Heart right ventricle (tissue), 16 donors: ENCODE measurements at regions of chr21 and their contacts with region 1.

Region 1: GRCh38 chr21:46025113-46025770 is 43.7 kb downstream of the COL6A1 start:
- DNase-seq: no peak
- ATAC-seq: no peak
- H3K4me3 ChIP-seq: no peak overlapping the region
- H3K27ac ChIP-seq: peak overlapping the region in 4 of 10 donors; percentile 11 to 49 (median 35)
- H3K4me1 ChIP-seq: peaks cover 0 to 22% (median 9%) of the 10 kb centered on the region in 9 donors
- H3K27me3 ChIP-seq: no peaks in the 10 kb centered on the region
- CTCF ChIP-seq: no peak

Region 2: DNA sequence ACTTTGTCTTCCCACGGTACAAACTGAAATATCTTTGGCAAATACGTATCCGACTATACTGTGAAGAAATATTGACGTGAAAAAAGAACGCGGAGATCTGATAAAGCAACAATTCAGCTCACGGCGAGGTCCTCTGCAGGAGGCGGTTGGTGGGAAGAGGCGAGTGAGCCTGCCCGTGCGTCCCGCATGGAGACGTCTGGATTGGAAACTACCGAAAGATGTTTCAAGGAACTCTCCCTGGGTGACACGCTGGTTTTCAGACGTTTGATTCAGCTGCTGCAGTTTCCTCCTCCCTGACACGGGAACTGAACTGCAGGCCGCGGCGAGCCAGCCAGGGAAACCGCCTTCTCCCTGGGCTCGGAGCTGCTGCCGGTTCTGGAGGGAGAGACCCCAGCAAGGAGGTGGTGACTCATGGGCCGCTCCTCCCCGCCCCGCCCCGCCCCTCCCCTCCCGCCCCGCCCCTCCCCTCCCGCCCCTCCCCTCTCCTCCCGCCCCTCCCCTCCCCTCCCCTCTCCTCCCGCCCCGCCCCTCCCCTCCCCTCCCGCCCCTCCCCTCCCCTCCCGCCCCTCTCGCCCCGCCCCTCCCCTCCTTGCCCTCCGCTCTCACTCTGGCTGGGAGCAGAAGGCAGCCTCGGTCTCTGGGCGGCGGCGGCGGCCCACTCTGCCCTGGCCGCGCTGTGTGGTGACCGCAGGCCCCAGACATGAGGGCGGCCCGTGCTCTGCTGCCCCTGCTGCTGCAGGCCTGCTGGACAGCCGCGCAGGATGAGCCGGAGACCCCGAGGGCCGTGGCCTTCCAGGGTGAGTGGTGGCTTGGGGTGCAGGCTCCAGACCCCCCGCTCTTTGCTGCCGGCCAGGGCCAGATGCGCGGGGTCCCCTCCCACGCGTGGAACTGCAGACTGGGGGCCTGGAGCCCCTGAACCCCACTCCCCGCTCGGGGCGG is 43.8 kb before region 1 on chr21 and contains the start of gene COL6A1:
- intact Hi-C with region 1: loop called in 1 of 10 experiments (anchors 5 kb)
- DNase-seq: peak; percentile 85
- ATAC-seq: peak; percentile 72 to 85 (median 77)
- H3K4me3 ChIP-seq: peak within 1 kb of the TSS; percentile 51 to 100 (median 96)
- H3K27ac ChIP-seq: peak within 1 kb of the TSS; percentile 64 to 92 (median 90)
- H3K4me1 ChIP-seq: peaks cover 0 to 65% (median 19%) of the 10 kb centered on the region in 9 donors
- H3K27me3 ChIP-seq: peaks cover 0 to 22% (median 0%) of the 10 kb centered on the region in 7 donors
- CTCF ChIP-seq: no peak
- total RNA-seq, gene COL6A1: 71.9 to 260 (median 100) TPM

Region 3: DNA sequence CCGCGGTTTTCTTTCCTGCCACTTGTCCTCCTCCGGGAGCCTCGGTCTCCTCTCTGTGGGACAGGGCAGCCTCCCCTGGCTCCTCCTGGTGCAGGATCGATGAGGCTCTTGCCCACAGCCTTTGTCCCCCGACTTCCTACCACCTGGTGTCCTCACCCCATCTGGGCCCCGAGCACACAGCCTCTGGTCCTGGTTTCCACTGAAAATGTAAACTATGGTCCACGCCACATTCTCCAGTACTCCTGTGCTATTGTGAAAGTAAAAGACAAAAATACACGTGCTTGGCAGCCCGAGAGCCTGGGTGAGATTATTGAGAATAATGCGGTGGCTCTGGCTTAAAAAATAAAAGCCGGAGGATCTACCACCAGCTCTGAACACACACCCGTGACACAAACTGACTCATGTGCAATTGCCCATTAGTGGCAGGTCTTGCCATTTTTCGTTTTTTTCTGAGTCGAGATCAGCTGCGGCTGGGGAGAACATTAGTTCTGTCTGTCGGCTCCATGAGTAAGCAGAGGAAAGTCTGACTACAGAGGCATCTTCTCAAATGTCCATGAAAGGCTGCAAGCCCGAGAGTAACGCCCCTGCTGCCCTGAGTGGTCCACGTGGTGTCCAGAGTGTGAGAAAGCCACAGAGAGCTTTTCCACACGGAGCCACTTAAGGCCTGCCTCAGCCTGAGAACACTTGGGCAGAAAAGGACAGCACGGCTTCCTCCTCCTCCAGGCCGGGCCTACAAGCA is 67.0 kb after region 1 on chr21:
- intact Hi-C with region 1: loop called in 1 of 10 experiments (anchors 5 kb)
- DNase-seq: peak; percentile 49 to 66
- ATAC-seq: peak; percentile 71 to 85 (median 81)
- H3K4me3 ChIP-seq: no peak overlapping the region
- H3K27ac ChIP-seq: peak overlapping the region; percentile 44 to 88 (median 80)
- H3K4me1 ChIP-seq: peaks cover under 1 to 31% (median 17%) of the 10 kb centered on the region in 9 donors
- H3K27me3 ChIP-seq: peaks cover 0 to 2% (median 0%) of the 10 kb centered on the region in 7 donors
- CTCF ChIP-seq: no peak